K562 (cell line): ENCODE measurements at regions of chr12 and their contacts with region 1.

Region 1: GRCh38 chr12:55188974-55189556 is 31.8 kb upstream of the OR10A7 start:
- DNase-seq: peak; percentile 55 to 86 (median 62)
- ATAC-seq: peak; percentile 93
- H3K4me3 ChIP-seq: no peak overlapping the region
- H3K27ac ChIP-seq: no peak overlapping the region
- H3K4me1 ChIP-seq: no peaks in the 10 kb centered on the region
- H3K27me3 ChIP-seq: no peaks in the 10 kb centered on the region; a peak in 1 of 5 replicates
- CTCF ChIP-seq: peak; percentile 50 to 87 (median 58); a peak in 5 of 6 replicates
- EP300 ChIP-seq: no peak
- POLR2A ChIP-seq: no peak
- RAD21 ChIP-seq: peak; percentile 96 to 97

Region 2: DNA sequence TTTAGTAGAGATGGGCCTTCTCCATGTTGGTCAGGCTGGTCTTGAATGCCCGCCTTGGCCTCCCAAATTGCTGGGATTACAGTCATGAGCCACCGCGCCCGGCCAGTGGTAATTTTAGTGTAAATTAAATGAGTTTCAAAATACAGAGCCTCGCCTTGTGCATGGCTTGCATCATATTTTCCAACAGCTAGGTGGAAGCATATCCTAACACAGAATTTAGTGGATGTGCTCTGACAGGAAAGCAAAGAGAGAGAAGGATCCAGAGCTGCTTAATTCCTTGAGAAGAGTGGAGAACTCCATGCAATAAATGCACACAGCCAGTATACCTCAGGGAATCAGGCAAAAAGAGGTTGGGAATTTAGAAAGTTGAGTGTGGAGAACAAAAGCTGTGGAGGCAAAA is 257.3 kb after region 1 on chr12:
- CTCF ChIA-PET with region 1: interaction called, 3 read pairs
- POLR2A ChIA-PET with region 1: no interaction called
- in situ Hi-C with region 1: no loop called
- intact Hi-C with region 1: loop called (anchors 10 kb)
- DNase-seq: no peak
- ATAC-seq: peak; percentile 40; the same call in 1 of the 3 replicates
- H3K4me3 ChIP-seq: no peak overlapping the region
- H3K27ac ChIP-seq: no peak overlapping the region
- H3K4me1 ChIP-seq: no peaks in the 10 kb centered on the region
- H3K27me3 ChIP-seq: no peaks in the 10 kb centered on the region
- CTCF ChIP-seq: peak; percentile 11 to 25 (median 21); a peak in 3 of 6 replicates
- EP300 ChIP-seq: no peak
- POLR2A ChIP-seq: no peak
- RAD21 ChIP-seq: peak; percentile 40 to 54